ENCODE measurements at regions of chr15 and their contacts with region 1.

Region 1: DNA sequence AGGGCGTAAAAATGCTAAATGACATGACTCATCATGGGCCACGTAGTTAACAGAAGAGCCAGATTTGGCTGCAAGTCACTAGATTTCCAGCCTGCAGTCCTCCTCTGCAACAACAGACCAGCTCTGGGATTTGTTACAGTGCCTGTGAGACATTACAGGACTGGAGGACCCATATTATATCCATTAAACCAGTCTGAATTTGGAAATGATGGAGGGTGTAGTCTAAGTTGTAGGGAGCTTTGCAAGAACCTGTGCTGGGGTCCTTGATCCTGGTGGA is 10.8 kb downstream of the ZNF774 start:
- DNase-seq: no peak
- H3K4me3 ChIP-seq: no peak overlapping the region
- H3K4me3 Mint-ChIP-seq: no peak overlapping the region
- H3K27ac ChIP-seq: no peak overlapping the region
- H3K27ac Mint-ChIP-seq: no peak overlapping the region
- H3K4me1 ChIP-seq: peaks cover 15% of the 10 kb centered on the region
- H3K4me1 Mint-ChIP-seq: peaks cover 15 to 28% (median 22%) of the 10 kb centered on the region in 4 donors
- H3K27me3 ChIP-seq: no peaks in the 10 kb centered on the region
- H3K27me3 Mint-ChIP-seq: no peaks in the 10 kb centered on the region

Region 2: DNA sequence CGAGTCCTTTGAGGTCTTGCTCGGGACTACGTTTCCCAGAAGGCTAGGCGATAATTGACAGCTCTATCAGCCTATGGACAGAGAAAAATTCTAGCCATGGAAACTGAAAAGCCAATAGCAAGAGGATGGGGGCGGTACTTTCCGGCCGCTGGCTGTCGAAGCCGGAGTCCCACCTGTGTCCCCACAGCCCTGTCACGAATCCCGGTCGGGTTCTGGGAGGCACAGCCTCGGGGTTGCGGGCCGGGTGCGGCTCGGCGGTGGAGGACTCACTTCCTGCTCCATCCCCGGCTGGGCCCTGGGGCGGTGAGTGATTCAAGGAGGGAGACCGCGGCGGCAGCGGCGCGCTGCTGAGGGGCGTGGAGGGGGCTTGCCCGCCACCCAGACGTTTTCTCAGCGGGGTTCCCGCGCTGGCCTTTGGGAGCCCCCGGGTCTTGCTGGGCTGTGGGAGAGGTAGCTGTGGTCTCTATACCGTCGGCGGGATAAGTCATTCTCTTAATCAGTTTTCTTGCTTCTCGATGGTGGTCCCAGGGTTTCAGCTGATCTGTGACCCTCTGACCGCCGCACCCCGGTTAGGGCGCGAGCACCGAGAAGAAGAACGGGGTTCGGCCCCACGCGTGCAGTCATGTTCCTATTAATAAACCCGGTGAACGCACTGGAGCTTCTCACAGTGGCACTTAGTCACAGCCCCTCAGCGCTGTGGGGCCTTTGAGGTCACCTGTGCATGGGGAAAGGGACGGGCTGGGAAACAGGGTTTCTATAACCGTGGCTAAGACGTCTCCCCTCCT is 10.6 kb before region 1 on chr15 and contains the start of gene ZNF774:
- CTCF ChIA-PET with region 1: interaction called, 6 read pairs
- POLR2A ChIA-PET with region 1: interaction called, 3 read pairs
- intact Hi-C with region 1: loop called (anchors 1 kb)
- DNase-seq: peak; percentile 92 to 95 (median 94)
- H3K4me3 ChIP-seq: peak within 1 kb of the TSS; percentile 50 to 79
- H3K4me3 Mint-ChIP-seq: peak within 1 kb of the TSS; percentile 83 to 95 (median 90)
- H3K27ac ChIP-seq: peak within 1 kb of the TSS; percentile 18
- H3K27ac Mint-ChIP-seq: peak within 1 kb of the TSS; percentile 24 to 85 (median 75)
- H3K4me1 ChIP-seq: peaks cover 10% of the 10 kb centered on the region
- H3K4me1 Mint-ChIP-seq: peaks cover 8 to 20% (median 14%) of the 10 kb centered on the region in 4 donors
- H3K27me3 ChIP-seq: no peaks in the 10 kb centered on the region
- H3K27me3 Mint-ChIP-seq: peaks cover 0 to 1% of the 10 kb centered on the region in 2 donors
- total RNA-seq, gene ZNF774: 0.78 to 0.81 TPM

Region 3: DNA sequence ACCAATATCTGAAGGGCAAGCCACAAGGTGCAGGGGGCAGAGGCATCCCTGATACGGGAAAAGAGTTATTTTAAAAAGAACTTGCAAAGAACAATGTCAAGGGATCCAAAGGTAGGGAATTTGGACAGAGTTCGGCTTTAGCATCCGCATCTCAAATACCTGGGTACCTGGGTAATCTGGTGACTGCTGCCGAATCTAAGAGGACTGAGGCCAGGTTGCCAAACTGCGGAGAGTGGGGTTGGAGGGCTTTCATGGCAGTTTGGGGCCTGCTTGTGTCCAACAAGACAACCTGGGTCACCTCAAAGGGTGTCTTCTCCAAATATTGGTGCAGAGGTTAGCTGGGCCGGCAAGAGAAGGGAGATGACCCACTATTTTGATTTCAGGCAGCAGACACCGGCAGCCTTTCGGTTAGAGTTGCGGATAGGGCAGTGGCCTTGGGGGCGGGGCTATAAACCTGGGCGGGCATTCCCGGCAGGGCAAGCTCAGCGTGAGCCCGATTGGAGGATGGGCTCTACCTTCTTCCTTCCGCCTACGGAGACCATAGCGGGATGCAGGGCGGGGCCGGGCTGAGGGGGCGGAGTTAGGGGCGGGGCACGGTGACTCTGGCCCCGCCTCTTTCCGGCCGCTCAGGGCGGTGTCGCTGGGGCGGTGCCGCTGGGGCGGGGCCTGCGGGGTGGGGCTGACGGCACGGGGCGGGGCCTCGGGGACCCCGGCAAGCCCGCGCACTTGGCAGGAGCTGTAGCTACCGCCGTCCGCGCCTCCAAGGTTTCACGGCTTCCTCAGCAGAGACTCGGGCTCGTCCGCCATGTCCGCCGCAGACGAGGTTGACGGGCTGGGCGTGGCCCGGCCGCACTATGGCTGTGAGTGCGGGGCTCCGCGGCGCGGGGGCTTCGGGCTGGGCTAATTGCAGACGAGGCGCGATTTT is 24.9 kb after region 1 on chr15 and contains the start of gene IQGAP1:
- CTCF ChIA-PET with region 1: interaction called, 11 read pairs
- POLR2A ChIA-PET with region 1: interaction called, 15 read pairs
- intact Hi-C with region 1: loop called (anchors 1 kb)
- DNase-seq: peak; percentile 92 to 97 (median 95)
- H3K4me3 ChIP-seq: peak within 1 kb of the TSS; percentile 70 to 85
- H3K4me3 Mint-ChIP-seq: peak within 1 kb of the TSS; percentile 89 to 96 (median 93)
- H3K27ac ChIP-seq: peak within 1 kb of the TSS; percentile 84
- H3K27ac Mint-ChIP-seq: peak within 1 kb of the TSS; percentile 93 to 98 (median 96)
- H3K4me1 ChIP-seq: peaks cover 42% of the 10 kb centered on the region
- H3K4me1 Mint-ChIP-seq: peaks cover 36 to 54% (median 48%) of the 10 kb centered on the region in 4 donors
- H3K27me3 ChIP-seq: no peaks in the 10 kb centered on the region
- H3K27me3 Mint-ChIP-seq: no peaks in the 10 kb centered on the region
- total RNA-seq, gene IQGAP1: 128 to 132 TPM

Region 4: DNA sequence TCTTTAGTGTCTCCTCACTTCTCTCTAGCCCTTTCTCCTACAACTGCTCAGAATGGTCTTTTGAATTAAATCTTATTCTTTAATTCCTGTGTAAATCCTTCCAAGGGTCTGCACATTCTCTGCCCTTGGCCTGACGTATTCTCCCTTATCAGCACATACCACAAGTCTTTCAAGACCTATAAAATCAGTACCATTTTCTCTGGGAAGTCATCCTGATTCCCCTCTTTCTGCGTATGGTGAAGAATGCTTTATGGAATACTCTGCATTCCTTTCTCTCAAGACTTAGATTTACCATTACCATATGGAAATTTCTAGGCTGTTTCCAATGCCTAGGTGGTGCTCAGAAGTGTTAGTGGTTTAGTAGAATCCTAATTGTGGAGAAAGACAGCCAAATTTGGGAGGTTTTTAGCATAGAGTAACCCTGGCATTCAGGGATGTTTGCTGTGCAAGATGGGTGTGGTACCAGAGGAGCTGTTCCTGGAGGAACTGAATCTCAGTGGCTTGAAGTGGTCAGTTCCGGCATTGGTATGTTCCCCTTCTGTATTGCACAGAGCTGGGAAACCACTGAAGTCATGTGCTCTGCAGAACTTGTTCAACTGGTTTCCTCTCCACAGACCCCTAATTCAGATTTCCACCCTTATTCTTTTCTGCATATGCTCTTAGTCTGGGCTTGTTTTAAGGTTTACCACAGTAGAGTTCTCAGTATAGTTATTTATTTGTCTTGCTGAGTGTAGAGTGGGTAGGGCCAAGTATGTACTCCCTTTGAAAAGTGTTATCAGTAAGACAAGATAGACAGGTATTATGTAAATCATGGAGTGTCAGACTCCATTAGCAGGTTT is 49.7 kb after region 1 on chr15:
- CTCF ChIA-PET with region 1: interaction called, 11 read pairs
- POLR2A ChIA-PET with region 1: no interaction called
- intact Hi-C with region 1: no loop called
- DNase-seq: peak in 1 of 5 donors; percentile 32
- H3K4me3 ChIP-seq: no peak overlapping the region
- H3K4me3 Mint-ChIP-seq: peak overlapping the region in 6 of 8 donors; percentile 13 to 69 (median 52)
- H3K27ac ChIP-seq: no peak overlapping the region
- H3K27ac Mint-ChIP-seq: peak overlapping the region in 6 of 7 donors; percentile 36 to 81 (median 64)
- H3K4me1 ChIP-seq: peaks cover 57% of the 10 kb centered on the region
- H3K4me1 Mint-ChIP-seq: peaks cover 57 to 87% (median 72%) of the 10 kb centered on the region in 4 donors
- H3K27me3 ChIP-seq: no peaks in the 10 kb centered on the region
- H3K27me3 Mint-ChIP-seq: no peaks in the 10 kb centered on the region

Region 5: GRCh38 chr15:90439946-90440345 is 77.1 kb after region 1 on chr15:
- CTCF ChIA-PET with region 1: interaction called, 13 read pairs
- POLR2A ChIA-PET with region 1: no interaction called
- intact Hi-C with region 1: no loop called
- DNase-seq: no peak
- H3K4me3 ChIP-seq: no peak overlapping the region
- H3K4me3 Mint-ChIP-seq: no peak overlapping the region
- H3K27ac ChIP-seq: no peak overlapping the region
- H3K27ac Mint-ChIP-seq: peak overlapping the region in 3 of 7 donors; percentile 35 to 83 (median 57)
- H3K4me1 ChIP-seq: peaks cover 5% of the 10 kb centered on the region
- H3K4me1 Mint-ChIP-seq: peaks cover 18 to 34% (median 22%) of the 10 kb centered on the region in 4 donors
- H3K27me3 ChIP-seq: no peaks in the 10 kb centered on the region
- H3K27me3 Mint-ChIP-seq: no peaks in the 10 kb centered on the region

Region 6: GRCh38 chr15:90482124-90483011 is 119.5 kb after region 1 on chr15:
- CTCF ChIA-PET with region 1: interaction called, 166 read pairs
- POLR2A ChIA-PET with region 1: interaction called, 3 read pairs
- intact Hi-C with region 1: loop called (anchors 1 kb)
- DNase-seq: peak; percentile 30 to 48 (median 47)
- H3K4me3 ChIP-seq: no peak overlapping the region
- H3K4me3 Mint-ChIP-seq: no peak overlapping the region
- H3K27ac ChIP-seq: no peak overlapping the region
- H3K27ac Mint-ChIP-seq: peak overlapping the region in 3 of 7 donors; percentile 59 to 73 (median 62)
- H3K4me1 ChIP-seq: peaks cover 33% of the 10 kb centered on the region
- H3K4me1 Mint-ChIP-seq: peaks cover 24 to 47% (median 37%) of the 10 kb centered on the region in 4 donors
- H3K27me3 ChIP-seq: no peaks in the 10 kb centered on the region
- H3K27me3 Mint-ChIP-seq: no peaks in the 10 kb centered on the region

Measured in CD4-positive, alpha-beta memory T cell (primary cell).